ENCODE measurements at regions of chr16 and their contacts with region 1.

Region 1: GRCh38 chr16:85354686-85355514 is 242.6 kb upstream of the CIBAR2 start:
- DNase-seq: no peak
- ATAC-seq: no peak
- H3K4me3 ChIP-seq: no peak overlapping the region
- H3K27ac ChIP-seq: no peak overlapping the region
- H3K4me1 ChIP-seq: peaks cover 17 to 21% of the 10 kb centered on the region in 2 donors
- H3K27me3 ChIP-seq: no peaks in the 10 kb centered on the region
- CTCF ChIP-seq: no peak
- POLR2A ChIP-seq: no peak

Region 2: GRCh38 chr16:85275533-85276249 is 79.2 kb before region 1 on chr16:
- in situ Hi-C with region 1: no loop called
- intact Hi-C with region 1: loop called (anchors 5 kb)
- DNase-seq: peak; percentile 50 to 57
- ATAC-seq: peak; percentile 51 to 68
- H3K4me3 ChIP-seq: no peak overlapping the region
- H3K27ac ChIP-seq: no peak overlapping the region
- H3K4me1 ChIP-seq: peaks cover 9 to 10% of the 10 kb centered on the region in 2 donors
- H3K27me3 ChIP-seq: no peaks in the 10 kb centered on the region
- CTCF ChIP-seq: peak; percentile 85 to 95 (median 91)
- POLR2A ChIP-seq: no peak

Region 3: GRCh38 chr16:85503679-85504231 is 148.9 kb after region 1 on chr16:
- in situ Hi-C with region 1: no loop called
- intact Hi-C with region 1: no loop called
- DNase-seq: no peak
- ATAC-seq: peak in 1 of 2 donors; percentile 57
- H3K4me3 ChIP-seq: no peak overlapping the region
- H3K27ac ChIP-seq: peak overlapping the region in 1 of 4 donors; percentile 35
- H3K4me1 ChIP-seq: peaks cover 13 to 20% of the 10 kb centered on the region in 2 donors
- H3K27me3 ChIP-seq: no peaks in the 10 kb centered on the region
- CTCF ChIP-seq: no peak
- POLR2A ChIP-seq: no peak

Measured in gastrocnemius medialis (tissue), 4 donors.